GM13976 (cell line): ENCODE measurements at regions of chr2 and their contacts with region 1.

Region 1: DNA sequence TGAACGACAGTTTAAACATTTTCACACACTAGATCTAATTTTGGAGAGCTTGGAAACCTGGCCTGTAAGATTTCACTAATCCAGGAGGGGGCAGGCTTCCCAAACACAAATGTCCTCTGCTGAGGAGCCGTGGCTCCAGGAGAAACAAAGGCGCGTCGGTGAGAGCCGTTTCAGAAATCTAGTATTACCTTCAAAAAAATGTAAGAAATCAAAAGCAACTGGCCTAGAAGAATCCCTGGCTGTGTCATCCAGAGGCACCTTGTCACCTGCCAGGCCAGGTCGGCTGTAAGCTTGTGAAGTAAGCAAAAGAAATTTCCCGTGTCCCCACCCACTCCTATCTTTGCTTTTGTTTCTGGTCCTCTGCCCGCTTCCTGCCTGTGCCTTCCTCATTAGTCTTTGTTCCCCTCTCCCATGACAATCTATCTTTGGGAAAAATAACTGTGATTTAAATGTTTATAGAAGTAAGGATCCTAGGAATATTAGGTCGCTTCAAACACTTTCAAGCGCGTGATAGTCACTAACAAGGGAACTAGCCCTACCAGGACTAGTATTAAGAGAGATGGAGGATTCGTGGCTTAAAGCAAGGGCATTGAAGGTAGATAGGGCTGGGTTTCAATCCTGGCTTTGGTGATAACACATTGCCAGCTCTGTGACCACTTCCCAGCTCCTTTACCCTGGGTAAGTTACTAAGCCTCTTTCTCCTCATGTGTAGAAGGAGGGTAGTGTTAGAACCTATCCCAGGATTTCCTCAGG is 99.5 kb upstream of the STK39 start:
- DNase-seq: peak; percentile 64
- CTCF ChIP-seq: peak; percentile 53

Region 2: GRCh38 chr2:168705534-168706470 is 358.9 kb after region 1 on chr2:
- in situ Hi-C with region 1: loop called (anchors 10 kb)
- DNase-seq: no peak
- CTCF ChIP-seq: peak; percentile 31

Region 3: DNA sequence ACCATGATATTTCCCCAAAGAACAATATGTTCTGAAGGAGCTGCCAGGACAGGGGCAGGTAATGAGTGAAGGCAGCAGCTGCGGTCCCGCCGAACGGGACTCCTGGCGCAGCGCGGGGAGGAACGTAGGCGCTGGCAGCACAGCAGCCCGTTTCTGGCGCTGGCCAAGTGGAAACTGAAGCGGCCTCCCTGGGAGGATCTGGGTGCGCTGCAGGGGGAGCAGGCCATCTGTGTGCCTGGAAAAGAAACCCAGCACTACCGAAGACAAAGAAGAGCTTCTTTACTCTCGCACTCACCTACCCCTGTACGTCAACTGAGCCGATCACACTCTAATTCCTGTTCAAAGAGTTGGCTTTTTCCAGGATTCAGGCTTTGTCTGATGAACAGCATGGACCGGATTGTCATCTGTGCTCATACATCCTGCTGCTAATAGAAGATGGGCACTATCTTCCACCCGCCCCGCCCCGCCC is 566.0 kb after region 1 on chr2:
- in situ Hi-C with region 1: loop called (anchors 5 kb)
- DNase-seq: no peak
- CTCF ChIP-seq: no peak